Mammary epithelial cell (primary cell): ENCODE measurements at regions of chr16 and their contacts with region 1.

Region 1: GRCh38 chr16:87613961-87614360 is 11.7 kb downstream of the JPH3 start:
- DNase-seq: no peak
- H3K4me3 ChIP-seq: no peak overlapping the region
- H3K27ac ChIP-seq: no peak overlapping the region
- H3K4me1 ChIP-seq: no peaks in the 10 kb centered on the region
- H3K27me3 ChIP-seq: peaks cover 3% of the 10 kb centered on the region
- CTCF ChIP-seq: no peak

Region 2: GRCh38 chr16:87368029-87368770 is 245.8 kb before region 1 on chr16:
- CTCF ChIA-PET with region 1: no interaction called
- dilution Hi-C with region 1: no loop called
- in situ Hi-C with region 1: no loop called
- intact Hi-C with region 1: no loop called
- DNase-seq: no peak
- H3K4me3 ChIP-seq: no peak overlapping the region
- H3K27ac ChIP-seq: no peak overlapping the region
- H3K4me1 ChIP-seq: no peaks in the 10 kb centered on the region
- H3K27me3 ChIP-seq: no peaks in the 10 kb centered on the region
- CTCF ChIP-seq: no peak

Region 3: DNA sequence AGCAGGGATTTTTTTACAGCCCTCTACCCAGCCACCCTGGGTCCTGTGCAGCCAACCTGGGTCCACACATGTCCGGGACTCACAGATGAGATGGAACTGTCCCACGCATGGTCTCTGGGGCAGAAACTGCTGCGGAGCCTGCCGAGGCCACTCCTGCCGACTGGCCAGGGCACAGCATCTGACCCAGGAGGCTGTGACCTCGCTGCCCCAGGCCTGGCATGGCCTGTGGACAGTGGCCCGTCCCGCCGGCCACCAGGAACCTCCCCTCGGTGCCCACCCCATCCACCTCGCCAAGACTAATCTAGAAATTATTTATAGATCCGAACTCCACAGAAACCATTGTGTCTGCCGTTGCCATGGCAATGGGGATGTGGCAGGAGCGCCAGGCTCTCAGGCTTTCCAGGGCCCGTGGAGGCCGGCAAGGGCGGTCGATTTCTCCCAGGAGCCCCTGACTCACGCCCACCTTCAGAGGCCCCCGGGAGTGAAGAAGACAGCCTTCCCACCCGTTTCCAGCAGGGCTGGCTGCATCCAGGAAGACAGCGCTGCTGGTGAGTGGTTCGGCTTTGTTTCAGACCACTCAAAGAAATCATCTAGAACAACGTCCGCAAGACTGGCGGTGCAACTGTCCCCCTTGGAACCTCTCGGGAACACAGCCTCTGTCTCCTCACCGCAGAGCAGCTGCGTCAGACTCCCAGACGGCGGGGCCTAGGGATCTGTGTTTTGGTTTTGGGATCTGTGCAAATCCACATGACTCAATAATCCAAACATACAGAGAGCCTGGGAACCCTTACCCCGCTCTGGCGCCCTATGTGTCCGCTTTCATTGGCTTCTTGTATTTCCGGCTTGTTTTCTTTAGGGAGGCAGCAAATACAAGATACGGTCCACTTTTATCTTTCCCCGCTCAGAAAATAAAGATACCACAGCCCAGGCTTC is 72.8 kb before region 1 on chr16:
- CTCF ChIA-PET with region 1: no interaction called
- dilution Hi-C with region 1: loop called (anchors 5 kb)
- in situ Hi-C with region 1: no loop called
- intact Hi-C with region 1: no loop called
- DNase-seq: no peak
- H3K4me3 ChIP-seq: no peak overlapping the region
- H3K27ac ChIP-seq: no peak overlapping the region
- H3K4me1 ChIP-seq: no peaks in the 10 kb centered on the region
- H3K27me3 ChIP-seq: peaks cover 5% of the 10 kb centered on the region
- CTCF ChIP-seq: no peak

Region 4: DNA sequence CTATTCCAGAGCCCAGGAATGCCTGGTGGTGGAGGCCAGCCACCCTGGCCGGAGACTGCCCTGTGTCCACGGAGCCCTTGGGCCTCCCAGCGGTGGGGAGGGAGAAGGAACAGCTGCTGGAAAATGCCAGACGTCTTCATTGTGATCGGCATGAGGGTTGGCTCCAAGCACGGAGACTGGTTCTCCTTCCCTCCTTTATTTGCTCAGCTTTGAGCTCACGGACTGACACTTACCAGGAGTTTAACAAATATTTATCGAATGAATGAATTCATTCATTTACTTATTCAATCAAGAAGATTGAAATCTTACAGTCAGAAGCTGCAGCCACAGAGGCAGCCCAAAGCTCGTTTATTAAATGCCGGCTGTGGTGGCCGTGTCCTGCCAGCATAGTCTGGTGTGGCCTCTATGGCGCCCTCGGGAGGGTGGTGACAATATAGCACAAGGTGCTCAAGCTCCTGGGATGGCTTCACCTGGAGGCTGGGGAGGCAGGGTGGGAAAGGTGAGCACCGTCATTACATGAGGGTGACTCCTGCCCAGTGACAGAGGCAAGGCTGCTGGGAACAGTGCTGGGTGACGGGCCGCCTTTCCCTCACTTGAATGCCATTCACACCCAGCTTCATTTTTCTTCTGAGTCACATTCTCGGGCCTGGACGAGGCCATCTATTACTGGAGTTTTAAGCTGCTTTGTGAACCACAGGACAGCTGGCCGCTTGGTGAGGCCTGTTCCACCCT is 42.7 kb before region 1 on chr16:
- CTCF ChIA-PET with region 1: no interaction called
- dilution Hi-C with region 1: loop called (anchors 5 kb)
- in situ Hi-C with region 1: no loop called
- intact Hi-C with region 1: no loop called
- DNase-seq: no peak
- H3K4me3 ChIP-seq: no peak overlapping the region
- H3K27ac ChIP-seq: no peak overlapping the region
- H3K4me1 ChIP-seq: no peaks in the 10 kb centered on the region
- H3K27me3 ChIP-seq: peaks cover 5% of the 10 kb centered on the region
- CTCF ChIP-seq: peak in 1 of 2 donors; percentile 60

Region 5: DNA sequence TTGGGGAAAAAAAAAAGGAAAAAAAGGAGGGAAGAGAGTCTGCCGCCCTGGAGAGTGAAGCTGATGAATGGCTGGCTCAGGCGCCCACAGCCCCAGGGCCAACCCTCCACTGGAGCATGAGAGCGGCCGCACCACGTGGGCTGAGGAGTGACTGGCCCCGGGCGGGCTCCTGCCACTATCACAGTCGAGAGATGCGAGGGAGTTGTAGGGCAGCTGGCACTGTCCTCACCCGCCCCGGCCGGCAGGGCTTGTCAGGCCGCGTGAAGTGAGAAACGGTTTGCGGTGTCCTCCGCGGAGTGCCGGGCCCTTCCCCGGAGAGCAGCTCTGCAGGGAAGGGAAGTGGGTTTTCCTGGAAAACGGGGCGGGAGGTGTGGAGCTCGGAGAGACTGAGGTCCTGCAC is 34.3 kb after region 1 on chr16:
- CTCF ChIA-PET with region 1: no interaction called
- dilution Hi-C with region 1: loop called (anchors 5 kb)
- in situ Hi-C with region 1: no loop called
- intact Hi-C with region 1: no loop called
- DNase-seq: no peak
- H3K4me3 ChIP-seq: no peak overlapping the region
- H3K27ac ChIP-seq: no peak overlapping the region
- H3K4me1 ChIP-seq: peaks cover 13% of the 10 kb centered on the region
- H3K27me3 ChIP-seq: peaks cover 23% of the 10 kb centered on the region
- CTCF ChIP-seq: no peak

Region 6: DNA sequence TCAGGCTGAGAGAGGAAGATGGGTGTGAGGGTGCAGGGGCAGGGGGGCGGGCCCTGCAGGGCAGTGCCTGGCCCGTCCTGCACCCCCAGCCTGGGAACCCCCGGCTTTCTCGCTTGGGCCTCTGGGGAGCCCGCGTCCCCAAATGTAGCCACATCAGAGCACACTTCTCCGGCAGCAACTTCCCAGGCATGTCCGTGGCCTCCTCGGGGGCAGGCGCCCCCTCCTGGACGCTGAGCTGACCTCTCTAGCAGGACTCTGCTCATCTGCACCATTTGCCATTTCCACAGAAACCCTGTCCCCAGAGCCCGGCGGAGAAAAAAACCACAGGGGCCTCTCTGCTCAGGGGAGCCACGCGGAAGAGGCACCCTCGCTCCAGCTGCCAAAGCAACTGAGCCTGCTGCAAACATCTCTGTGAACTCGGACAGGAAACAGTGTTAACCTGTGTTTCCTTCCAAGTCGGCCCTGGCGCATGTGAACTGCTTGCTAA is 88.4 kb after region 1 on chr16:
- CTCF ChIA-PET with region 1: no interaction called
- dilution Hi-C with region 1: loop called (anchors 5 kb)
- in situ Hi-C with region 1: no loop called
- intact Hi-C with region 1: no loop called
- DNase-seq: no peak
- H3K4me3 ChIP-seq: no peak overlapping the region
- H3K27ac ChIP-seq: no peak overlapping the region
- H3K4me1 ChIP-seq: no peaks in the 10 kb centered on the region
- H3K27me3 ChIP-seq: no peaks in the 10 kb centered on the region
- CTCF ChIP-seq: peak; percentile 19 to 34

Region 7: DNA sequence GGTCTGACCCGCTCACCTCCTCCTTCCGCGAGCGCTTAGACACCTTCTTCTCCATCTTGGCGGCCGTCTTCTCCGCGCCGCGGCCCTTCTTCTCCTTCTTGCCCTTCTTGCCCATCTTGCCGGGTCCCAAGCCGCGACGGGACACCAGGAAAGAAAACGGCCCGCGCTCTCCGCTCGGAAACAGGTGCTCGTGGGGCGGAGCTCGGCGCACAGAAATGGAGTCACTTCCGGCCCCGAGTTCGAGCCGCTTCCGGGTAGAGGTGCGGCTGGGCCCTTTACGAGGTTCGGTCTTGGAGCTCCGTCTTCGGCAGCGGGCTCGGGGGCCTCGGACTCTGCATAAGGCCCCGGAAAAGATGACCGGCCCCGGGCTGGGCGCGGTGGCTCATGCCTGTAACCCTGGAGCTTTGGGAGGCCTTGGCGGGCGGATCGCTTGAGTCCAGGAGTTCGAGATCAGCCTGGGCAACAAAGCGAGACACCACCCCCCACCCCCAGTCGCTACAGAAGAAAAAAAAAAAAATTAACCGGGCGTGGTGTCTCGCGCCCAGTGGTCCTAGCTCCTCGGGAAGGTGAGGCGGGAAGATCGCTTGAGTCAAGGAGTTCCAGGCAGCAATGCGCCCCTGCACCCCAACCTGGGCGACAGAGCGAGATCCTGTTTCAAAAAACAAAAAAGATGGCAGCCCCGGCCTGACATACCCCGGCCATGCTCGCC is 152.0 kb after region 1 on chr16 and contains the start of gene KLHDC4:
- CTCF ChIA-PET with region 1: no interaction called
- dilution Hi-C with region 1: loop called (anchors 5 kb)
- in situ Hi-C with region 1: no loop called
- intact Hi-C with region 1: no loop called
- DNase-seq: peak; percentile 82
- H3K4me3 ChIP-seq: peak within 1 kb of the TSS; percentile 94 to 96 (median 95)
- H3K27ac ChIP-seq: peak within 1 kb of the TSS; percentile 88
- H3K4me1 ChIP-seq: peaks cover 10% of the 10 kb centered on the region
- H3K27me3 ChIP-seq: no peaks in the 10 kb centered on the region
- CTCF ChIP-seq: no peak
- total RNA-seq, gene KLHDC4: 21.7 to 39.0 TPM